B cell (primary cell): ENCODE measurements at regions of chr11 and their contacts with region 1.

Region 1: DNA sequence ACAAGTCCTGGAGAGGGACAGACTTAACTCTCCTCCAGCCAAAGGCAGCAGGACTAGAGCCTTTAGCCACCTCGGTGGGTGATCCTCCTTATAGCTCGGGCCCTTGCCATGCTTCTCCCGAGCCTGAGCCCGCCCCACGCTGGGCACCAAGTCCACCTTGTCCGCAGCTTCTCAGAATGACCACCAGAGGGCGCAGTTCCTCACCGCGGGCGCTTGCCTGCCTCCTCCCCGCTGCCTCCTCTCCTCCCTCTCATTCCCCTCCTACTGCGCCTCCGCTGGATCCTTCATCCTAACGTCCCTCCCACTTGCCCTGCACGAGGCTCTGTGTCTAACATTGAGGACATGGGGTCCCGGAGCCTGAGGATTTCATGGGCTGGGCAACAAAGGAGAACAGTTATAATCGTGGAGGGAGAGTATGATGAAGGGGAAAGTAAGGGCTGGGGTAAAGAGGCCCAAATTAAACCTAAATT is 11.3 kb upstream of the MOGAT2 start:
- DNase-seq: peak; percentile 82
- ATAC-seq: peak; percentile 84
- H3K4me3 ChIP-seq: no peak overlapping the region
- H3K4me3 Mint-ChIP-seq: no peak overlapping the region
- H3K27ac ChIP-seq: no peak overlapping the region
- H3K27ac Mint-ChIP-seq: no peak overlapping the region
- H3K4me1 ChIP-seq: peaks cover 0 to 7% of the 10 kb centered on the region in 2 donors
- H3K4me1 Mint-ChIP-seq: peaks cover 12% of the 10 kb centered on the region
- H3K27me3 ChIP-seq: peaks cover 0 to 8% (median 2%) of the 10 kb centered on the region in 4 experiments
- H3K27me3 Mint-ChIP-seq: peaks cover 11% of the 10 kb centered on the region
- CTCF ChIP-seq: peak; percentile 97

Region 2: GRCh38 chr11:75214411-75214821 is 491.9 kb before region 1 on chr11:
- CTCF ChIA-PET with region 1: no interaction called
- POLR2A ChIA-PET with region 1: no interaction called
- intact Hi-C with region 1: no loop called
- DNase-seq: peak; percentile 64
- ATAC-seq: peak; percentile 36
- H3K4me3 ChIP-seq: no peak overlapping the region
- H3K4me3 Mint-ChIP-seq: no peak overlapping the region
- H3K27ac ChIP-seq: no peak overlapping the region
- H3K27ac Mint-ChIP-seq: no peak overlapping the region
- H3K4me1 ChIP-seq: no peaks in the 10 kb centered on the region
- H3K4me1 Mint-ChIP-seq: no peaks in the 10 kb centered on the region
- H3K27me3 ChIP-seq: peaks cover 0 to 2% (median 0%) of the 10 kb centered on the region in 4 experiments
- H3K27me3 Mint-ChIP-seq: peaks cover 49% of the 10 kb centered on the region
- CTCF ChIP-seq: no peak

Region 3: DNA sequence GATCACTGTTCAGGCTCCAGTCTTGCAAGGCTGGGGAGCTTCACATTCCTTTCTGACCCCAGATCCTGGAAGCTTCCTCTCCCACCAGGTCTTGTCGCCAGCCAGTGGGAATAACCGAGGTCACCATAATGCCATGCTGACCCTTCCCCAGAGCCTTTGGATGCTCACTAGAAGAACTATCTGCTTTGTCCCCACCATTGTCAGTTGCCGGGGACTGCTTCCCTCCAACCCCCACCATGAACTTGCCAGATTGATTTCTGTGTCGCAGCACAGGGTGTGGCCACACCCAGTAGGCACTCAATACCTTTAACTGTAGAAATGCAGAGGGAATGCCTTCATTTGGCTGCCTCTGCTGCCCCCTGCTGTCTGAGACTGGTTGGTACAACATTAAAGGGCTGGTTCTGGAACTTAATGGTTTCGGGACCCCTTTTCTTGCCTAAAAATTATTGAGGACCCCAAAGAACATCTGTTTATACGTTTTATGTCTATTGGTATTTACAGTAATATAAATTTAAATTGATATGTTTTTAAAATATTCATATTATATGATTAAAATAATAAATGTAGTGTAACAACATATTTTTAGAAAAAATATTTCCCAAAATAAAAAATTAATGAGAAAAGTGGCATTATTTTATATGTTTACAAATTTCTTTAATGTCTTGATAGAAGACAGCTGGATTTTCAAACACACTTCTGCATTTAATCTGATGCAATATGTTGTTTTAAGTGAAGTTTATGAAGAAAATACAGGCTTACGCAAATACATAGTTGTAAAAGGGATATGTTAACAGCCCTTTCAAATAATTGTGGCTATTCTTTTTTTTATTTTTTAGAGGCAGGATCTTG is 173.9 kb before region 1 on chr11:
- CTCF ChIA-PET with region 1: no interaction called
- POLR2A ChIA-PET with region 1: no interaction called
- intact Hi-C with region 1: no loop called
- DNase-seq: peak; percentile 84
- ATAC-seq: peak; percentile 72
- H3K4me3 ChIP-seq: no peak overlapping the region
- H3K4me3 Mint-ChIP-seq: no peak overlapping the region
- H3K27ac ChIP-seq: no peak overlapping the region
- H3K27ac Mint-ChIP-seq: peak overlapping the region; percentile 0
- H3K4me1 ChIP-seq: peaks cover 12 to 24% of the 10 kb centered on the region in 2 donors
- H3K4me1 Mint-ChIP-seq: peaks cover 36% of the 10 kb centered on the region
- H3K27me3 ChIP-seq: peaks cover 0 to 5% (median 3%) of the 10 kb centered on the region in 4 experiments
- H3K27me3 Mint-ChIP-seq: peaks cover 15% of the 10 kb centered on the region
- CTCF ChIP-seq: peak; percentile 92

Region 4: GRCh38 chr11:75547580-75548058 is 158.7 kb before region 1 on chr11:
- CTCF ChIA-PET with region 1: interaction called, 6 read pairs
- POLR2A ChIA-PET with region 1: no interaction called
- intact Hi-C with region 1: loop called (anchors 1 kb)
- DNase-seq: peak; percentile 66
- ATAC-seq: peak; percentile 47
- H3K4me3 ChIP-seq: no peak overlapping the region
- H3K4me3 Mint-ChIP-seq: no peak overlapping the region
- H3K27ac ChIP-seq: no peak overlapping the region
- H3K27ac Mint-ChIP-seq: no peak overlapping the region
- H3K4me1 ChIP-seq: no peaks in the 10 kb centered on the region
- H3K4me1 Mint-ChIP-seq: no peaks in the 10 kb centered on the region
- H3K27me3 ChIP-seq: peaks cover 0 to 20% (median 5%) of the 10 kb centered on the region in 4 experiments
- H3K27me3 Mint-ChIP-seq: peaks cover 14% of the 10 kb centered on the region
- CTCF ChIP-seq: peak; percentile 84